CD8-positive, alpha-beta T cell (primary cell): ENCODE measurements at regions of chr13 and their contacts with region 1.

Region 1: DNA sequence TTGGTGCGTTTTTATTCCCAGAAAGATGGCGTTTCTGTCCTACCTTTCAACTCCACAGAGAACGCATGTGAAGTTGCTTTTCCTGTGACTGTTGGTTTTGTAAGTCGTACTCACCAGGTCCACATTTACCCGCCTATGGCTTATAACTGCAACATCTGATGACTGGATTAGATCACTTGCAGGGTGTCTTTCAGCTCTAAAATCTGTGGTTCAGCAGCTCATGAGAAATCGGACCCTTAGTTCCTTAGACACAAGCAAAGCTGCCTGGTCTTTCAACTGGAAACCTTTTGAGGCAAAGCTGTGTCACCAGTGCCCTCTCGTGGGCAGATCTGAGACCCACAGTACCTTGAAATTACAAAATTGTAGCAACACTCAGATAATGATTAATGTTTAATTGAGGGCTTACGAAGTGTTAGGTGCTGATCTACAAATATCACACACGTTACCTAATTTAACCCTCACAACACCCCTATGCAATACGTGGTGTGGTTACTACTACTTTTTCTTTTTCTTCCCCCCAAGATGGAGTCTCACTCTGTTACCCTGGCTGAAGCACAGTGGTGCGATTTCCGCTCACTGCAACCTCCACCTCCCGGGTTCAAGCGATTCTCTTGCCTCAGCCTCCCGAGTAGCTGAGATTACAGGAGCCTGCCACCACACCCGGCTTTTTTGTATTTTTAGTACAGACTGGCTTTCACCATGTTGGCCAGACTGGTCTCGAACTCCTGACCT is 65.4 kb downstream of the RUBCNL start:
- DNase-seq: peak; percentile 55 to 88 (median 76)
- ATAC-seq: peak; percentile 89
- H3K4me3 ChIP-seq: peak overlapping the region; percentile 6 to 35
- H3K4me3 Mint-ChIP-seq: peak overlapping the region; percentile 73
- H3K27ac ChIP-seq: peak overlapping the region; percentile 46 to 66
- H3K27ac Mint-ChIP-seq: peak overlapping the region; percentile 93
- H3K4me1 ChIP-seq: peaks cover 14% of the 10 kb centered on the region
- H3K4me1 Mint-ChIP-seq: peaks cover 44% of the 10 kb centered on the region
- H3K27me3 ChIP-seq: no peaks in the 10 kb centered on the region
- H3K27me3 Mint-ChIP-seq: no peaks in the 10 kb centered on the region
- CTCF ChIP-seq: peak; percentile 92

Region 2: GRCh38 chr13:45623515-45624090 is 698.1 kb before region 1 on chr13:
- CTCF ChIA-PET with region 1: interaction called, 7 read pairs
- POLR2A ChIA-PET with region 1: no interaction called
- intact Hi-C with region 1: loop called in 1 of 2 experiments (anchors 5 kb)
- DNase-seq: peak in 2 of 9 experiments; percentile 21 to 34
- ATAC-seq: no peak
- H3K4me3 ChIP-seq: no peak overlapping the region
- H3K4me3 Mint-ChIP-seq: no peak overlapping the region
- H3K27ac ChIP-seq: no peak overlapping the region
- H3K27ac Mint-ChIP-seq: no peak overlapping the region
- H3K4me1 ChIP-seq: peaks cover 5% of the 10 kb centered on the region
- H3K4me1 Mint-ChIP-seq: peaks cover 2% of the 10 kb centered on the region
- H3K27me3 ChIP-seq: no peaks in the 10 kb centered on the region
- H3K27me3 Mint-ChIP-seq: peaks cover 27% of the 10 kb centered on the region
- CTCF ChIP-seq: peak; percentile 53

Region 3: DNA sequence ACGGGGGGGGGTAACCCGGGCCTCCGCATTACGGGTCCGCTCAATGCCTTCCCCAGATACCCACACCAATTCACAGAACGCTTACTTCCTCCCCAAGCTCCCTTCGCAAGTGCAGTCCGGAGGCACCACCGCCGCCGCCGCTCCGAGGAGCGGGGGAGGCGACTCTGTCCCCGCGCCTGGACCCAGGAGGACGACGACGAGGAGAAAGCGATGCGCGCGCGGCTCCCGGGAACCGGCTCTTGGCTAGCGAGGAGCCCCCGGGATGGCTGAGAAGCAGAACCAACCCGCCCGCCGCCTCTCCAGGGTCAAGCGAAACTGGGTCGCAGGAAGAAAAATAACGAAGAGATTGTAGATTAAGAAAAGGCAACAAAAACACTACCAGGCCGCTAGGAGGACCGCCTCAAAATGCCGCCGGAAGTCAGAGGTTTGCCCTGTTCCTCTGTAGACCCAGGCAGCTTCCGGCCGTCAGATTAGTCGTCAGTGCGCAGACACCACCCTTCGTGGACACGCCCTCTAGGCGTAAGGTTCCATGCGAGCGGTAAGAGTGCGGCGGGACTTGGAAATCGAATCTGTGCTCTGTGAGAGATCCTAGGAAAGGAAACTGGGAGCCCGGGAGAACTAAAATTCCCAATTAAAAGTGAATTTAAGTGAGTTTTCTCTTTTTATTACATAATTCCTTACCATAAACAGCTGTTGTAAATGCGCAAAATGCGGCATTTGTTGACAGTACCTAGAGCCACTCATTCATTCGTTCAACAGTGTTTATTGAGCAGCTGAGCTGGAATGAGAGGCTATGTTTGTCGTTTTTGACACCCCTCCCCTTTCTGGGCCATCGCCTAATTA is 269.1 kb before region 1 on chr13 and contains the start of gene ZC3H13:
- CTCF ChIA-PET with region 1: no interaction called
- POLR2A ChIA-PET with region 1: no interaction called
- intact Hi-C with region 1: loop called in 1 of 2 experiments (anchors 5 kb)
- DNase-seq: peak; percentile 84 to 97 (median 91)
- ATAC-seq: peak; percentile 97
- H3K4me3 ChIP-seq: peak within 1 kb of the TSS; percentile 77 to 89
- H3K4me3 Mint-ChIP-seq: peak within 1 kb of the TSS; percentile 88
- H3K27ac ChIP-seq: peak within 1 kb of the TSS; percentile 89 to 98
- H3K27ac Mint-ChIP-seq: peak within 1 kb of the TSS; percentile 94
- H3K4me1 ChIP-seq: peaks cover 23% of the 10 kb centered on the region
- H3K4me1 Mint-ChIP-seq: peaks cover 46% of the 10 kb centered on the region
- H3K27me3 ChIP-seq: no peaks in the 10 kb centered on the region
- H3K27me3 Mint-ChIP-seq: peaks cover 6% of the 10 kb centered on the region
- CTCF ChIP-seq: peak; percentile 37
- total RNA-seq, gene ZC3H13: 50.7 to 54.2 TPM

Region 4: DNA sequence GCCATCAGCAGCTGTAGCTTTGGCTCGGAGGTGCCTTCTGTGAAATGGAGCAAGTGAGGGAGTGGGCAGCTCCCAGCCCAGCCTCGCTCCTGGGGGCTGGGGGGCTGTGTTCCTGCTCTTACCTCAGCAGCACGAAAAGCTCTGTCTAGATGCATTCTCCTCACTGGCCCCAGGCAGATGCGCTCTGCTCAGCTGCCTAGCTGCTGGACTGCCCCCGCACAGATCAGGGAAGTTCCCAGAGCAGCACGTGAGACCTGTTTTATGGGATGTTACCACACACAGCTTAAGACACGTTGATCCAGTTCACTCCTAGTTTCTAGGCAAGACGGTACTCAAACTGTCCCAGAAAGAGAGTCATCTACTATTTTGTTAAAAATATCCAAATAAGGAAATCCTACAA is 153.3 kb before region 1 on chr13:
- CTCF ChIA-PET with region 1: interaction called, 21 read pairs
- POLR2A ChIA-PET with region 1: interaction called, 10 read pairs
- intact Hi-C with region 1: no loop called
- DNase-seq: peak in 4 of 9 experiments; percentile 29 to 86 (median 59)
- ATAC-seq: peak; percentile 15
- H3K4me3 ChIP-seq: peak overlapping the region; percentile 9 to 15
- H3K4me3 Mint-ChIP-seq: peak overlapping the region; percentile 68
- H3K27ac ChIP-seq: peak overlapping the region; percentile 14 to 83
- H3K27ac Mint-ChIP-seq: peak overlapping the region; percentile 89
- H3K4me1 ChIP-seq: peaks cover 93% of the 10 kb centered on the region
- H3K4me1 Mint-ChIP-seq: peaks cover 90% of the 10 kb centered on the region
- H3K27me3 ChIP-seq: no peaks in the 10 kb centered on the region
- H3K27me3 Mint-ChIP-seq: no peaks in the 10 kb centered on the region
- CTCF ChIP-seq: no peak

Region 5: GRCh38 chr13:46235286-46235685 is 86.4 kb before region 1 on chr13:
- CTCF ChIA-PET with region 1: no interaction called
- POLR2A ChIA-PET with region 1: no interaction called
- intact Hi-C with region 1: loop called in 1 of 2 experiments (anchors 1 kb)
- DNase-seq: no peak
- ATAC-seq: no peak
- H3K4me3 ChIP-seq: no peak overlapping the region
- H3K4me3 Mint-ChIP-seq: no peak overlapping the region
- H3K27ac ChIP-seq: no peak overlapping the region
- H3K27ac Mint-ChIP-seq: no peak overlapping the region
- H3K4me1 ChIP-seq: no peaks in the 10 kb centered on the region
- H3K4me1 Mint-ChIP-seq: no peaks in the 10 kb centered on the region
- H3K27me3 ChIP-seq: no peaks in the 10 kb centered on the region
- H3K27me3 Mint-ChIP-seq: no peaks in the 10 kb centered on the region
- CTCF ChIP-seq: no peak

Region 6: GRCh38 chr13:46303742-46304385 is 17.8 kb before region 1 on chr13:
- CTCF ChIA-PET with region 1: interaction called, 15 read pairs
- POLR2A ChIA-PET with region 1: interaction called, 4 read pairs
- intact Hi-C with region 1: no loop called
- DNase-seq: peak in 2 of 9 experiments; percentile 31 to 60
- ATAC-seq: peak; percentile 71
- H3K4me3 ChIP-seq: peak overlapping the region in 1 of 2 experiments; percentile 3
- H3K4me3 Mint-ChIP-seq: peak overlapping the region; percentile 60
- H3K27ac ChIP-seq: peak overlapping the region in 1 of 2 experiments; percentile 21
- H3K27ac Mint-ChIP-seq: peak overlapping the region; percentile 74
- H3K4me1 ChIP-seq: peaks cover 6% of the 10 kb centered on the region
- H3K4me1 Mint-ChIP-seq: peaks cover 25% of the 10 kb centered on the region
- H3K27me3 ChIP-seq: no peaks in the 10 kb centered on the region
- H3K27me3 Mint-ChIP-seq: no peaks in the 10 kb centered on the region
- CTCF ChIP-seq: no peak